Prostate gland (tissue), 2 donors: ENCODE measurements at regions of chr17 and their contacts with region 1.

Region 1: DNA sequence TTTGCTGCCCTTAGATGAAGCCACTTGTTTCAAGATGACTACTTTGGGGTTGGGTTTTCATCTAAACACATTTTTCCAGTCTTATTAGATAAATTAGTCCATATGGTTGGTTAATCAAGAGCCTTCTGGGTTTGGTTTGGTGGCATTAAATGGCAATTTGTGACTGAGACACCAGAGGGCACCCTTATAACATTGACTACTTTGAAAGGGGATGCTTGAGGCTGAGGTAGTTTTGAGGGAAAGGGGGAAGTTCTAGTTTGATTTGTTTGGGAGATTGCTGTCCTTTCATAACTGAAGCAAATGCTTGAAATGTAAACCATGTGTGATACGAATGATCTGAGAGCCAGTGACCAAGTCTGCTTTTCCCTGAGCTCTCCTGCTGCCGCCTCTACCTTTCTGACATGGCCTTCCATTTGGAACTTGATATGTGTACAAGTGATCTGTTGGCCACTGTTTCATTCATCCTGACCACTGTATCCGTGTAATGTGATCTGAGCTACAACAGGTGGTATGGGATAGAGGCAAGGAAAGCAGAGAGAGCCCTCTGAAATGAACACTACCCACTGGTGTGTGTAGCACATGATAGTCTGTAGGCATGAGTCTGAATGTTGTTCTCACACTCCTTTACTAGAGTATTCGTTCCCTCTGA is 5.8 kb upstream of the RARA start:
- DNase-seq: no peak
- H3K4me3 ChIP-seq: no peak overlapping the region
- H3K27ac ChIP-seq: no peak overlapping the region
- H3K4me1 ChIP-seq: peaks cover 18% of the 10 kb centered on the region
- H3K27me3 ChIP-seq: no peaks in the 10 kb centered on the region
- CTCF ChIP-seq: peak; percentile 61 to 91 (median 83)
- POLR2A ChIP-seq: no peak

Region 2: DNA sequence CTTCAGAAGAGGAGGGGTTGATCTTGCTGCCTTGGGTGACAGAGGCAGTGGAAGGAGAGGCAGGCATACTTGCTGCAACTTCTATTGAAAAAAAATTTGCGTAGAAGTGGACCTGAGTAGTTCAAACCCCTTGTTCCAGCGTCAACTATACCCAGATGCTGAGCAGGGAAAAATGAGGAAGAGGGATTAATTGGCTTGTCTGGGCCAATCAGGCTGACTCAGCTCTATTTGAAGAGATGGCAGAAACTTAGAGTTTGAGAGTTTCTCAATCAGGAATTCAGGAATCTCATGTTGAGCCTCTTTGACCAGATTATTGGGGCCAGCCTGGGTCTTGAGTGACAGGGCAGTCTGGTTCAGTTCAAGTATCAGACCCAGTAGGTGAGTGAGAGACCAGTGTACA is 145.2 kb before region 1 on chr17:
- intact Hi-C with region 1: no loop called
- DNase-seq: no peak
- H3K4me3 ChIP-seq: no peak overlapping the region
- H3K27ac ChIP-seq: no peak overlapping the region
- H3K4me1 ChIP-seq: no peaks in the 10 kb centered on the region
- H3K27me3 ChIP-seq: no peaks in the 10 kb centered on the region
- CTCF ChIP-seq: no peak
- POLR2A ChIP-seq: no peak

Region 3: GRCh38 chr17:40209404-40210093 is 93.6 kb before region 1 on chr17:
- intact Hi-C with region 1: no loop called
- DNase-seq: no peak
- H3K4me3 ChIP-seq: no peak overlapping the region
- H3K27ac ChIP-seq: no peak overlapping the region
- H3K4me1 ChIP-seq: no peaks in the 10 kb centered on the region
- H3K27me3 ChIP-seq: no peaks in the 10 kb centered on the region
- CTCF ChIP-seq: no peak
- POLR2A ChIP-seq: no peak

Region 4: DNA sequence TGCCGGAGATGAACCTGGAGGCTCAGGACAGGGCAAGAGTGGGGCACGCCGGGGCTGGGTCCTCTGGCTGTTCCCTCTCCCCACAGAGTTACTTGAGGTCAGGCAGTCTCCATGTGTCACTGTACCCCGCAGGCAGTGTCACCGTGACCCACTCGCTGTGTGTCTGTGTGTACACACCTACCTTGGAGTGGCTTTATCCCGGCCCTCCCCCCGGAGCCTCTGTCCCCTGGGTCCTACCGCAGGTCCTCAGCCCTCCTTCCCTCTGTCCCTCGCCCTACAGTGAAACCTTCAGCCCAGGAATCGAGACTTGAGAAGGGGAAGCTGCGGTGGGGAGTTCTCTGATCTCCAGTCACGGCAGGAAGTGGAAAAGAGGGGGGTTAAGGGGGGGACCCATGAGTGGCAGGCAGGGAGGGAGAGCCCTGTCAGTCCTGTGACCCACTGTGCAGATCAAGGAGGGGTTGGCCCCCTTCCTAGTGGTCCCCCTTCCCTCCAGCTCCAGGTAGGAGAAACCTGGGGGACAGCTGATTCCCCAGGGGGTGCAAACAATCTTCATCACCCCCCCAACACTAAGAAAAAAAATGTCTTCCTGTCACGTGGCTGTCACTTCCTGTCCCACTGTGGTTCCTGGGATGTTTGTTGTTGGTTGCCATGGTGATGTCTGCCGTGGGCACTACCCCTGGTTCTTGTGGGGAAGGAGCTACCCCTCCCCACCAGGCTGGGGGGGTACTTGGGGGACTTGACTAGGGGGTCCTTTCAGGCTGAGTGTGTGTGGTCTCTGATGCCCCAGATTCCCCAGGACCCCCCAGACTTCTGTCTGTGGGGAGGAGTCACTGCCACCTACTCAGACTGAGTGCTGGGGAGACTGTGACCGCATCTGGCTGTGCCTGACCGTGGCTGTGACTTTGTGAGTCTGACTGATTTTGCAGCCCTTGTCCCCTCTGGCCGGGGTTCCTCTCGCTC is 19.5 kb after region 1 on chr17:
- intact Hi-C with region 1: no loop called
- DNase-seq: no peak
- H3K4me3 ChIP-seq: peak overlapping the region; percentile 1 to 19
- H3K27ac ChIP-seq: peak overlapping the region; percentile 58 to 64
- H3K4me1 ChIP-seq: peaks cover 31% of the 10 kb centered on the region
- H3K27me3 ChIP-seq: no peaks in the 10 kb centered on the region
- CTCF ChIP-seq: no peak
- POLR2A ChIP-seq: no peak

Region 5: DNA sequence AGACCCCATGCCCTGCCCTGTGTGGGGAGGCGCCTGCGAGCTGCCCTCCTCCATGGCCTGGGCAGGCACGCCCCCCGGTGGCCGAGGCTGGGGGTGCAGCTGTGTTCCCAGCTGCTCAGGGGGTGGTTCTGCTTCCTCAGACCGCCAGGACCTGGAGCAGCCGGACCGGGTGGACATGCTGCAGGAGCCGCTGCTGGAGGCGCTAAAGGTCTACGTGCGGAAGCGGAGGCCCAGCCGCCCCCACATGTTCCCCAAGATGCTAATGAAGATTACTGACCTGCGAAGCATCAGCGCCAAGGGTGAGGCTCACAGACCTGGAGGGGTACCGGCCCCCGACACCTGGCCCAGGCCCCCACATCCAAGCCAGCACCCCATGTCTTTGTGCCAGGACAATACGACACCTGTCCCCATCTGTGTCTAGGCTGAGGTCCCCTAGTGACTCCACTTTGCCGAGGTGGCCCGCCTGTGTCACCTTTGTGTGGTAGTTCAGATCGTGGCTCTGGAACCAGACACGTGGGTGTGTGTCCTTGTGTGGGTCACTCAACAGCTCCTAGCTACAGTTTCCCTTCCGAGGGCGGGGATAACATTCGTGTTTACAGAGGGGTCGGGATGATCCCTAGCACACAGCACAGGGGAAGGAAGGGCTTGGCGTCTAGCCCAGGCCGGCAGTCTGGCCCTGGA is 52.1 kb after region 1 on chr17:
- intact Hi-C with region 1: loop called (anchors 1 kb)
- DNase-seq: peak; percentile 57
- H3K4me3 ChIP-seq: no peak overlapping the region
- H3K27ac ChIP-seq: peak overlapping the region in 1 of 2 donors; percentile 31
- H3K4me1 ChIP-seq: no peaks in the 10 kb centered on the region
- H3K27me3 ChIP-seq: no peaks in the 10 kb centered on the region
- CTCF ChIP-seq: peak; percentile 95 to 99 (median 98)
- POLR2A ChIP-seq: no peak

Region 6: GRCh38 chr17:40371261-40371929 is 68.3 kb after region 1 on chr17:
- intact Hi-C with region 1: no loop called
- DNase-seq: no peak
- H3K4me3 ChIP-seq: no peak overlapping the region
- H3K27ac ChIP-seq: no peak overlapping the region
- H3K4me1 ChIP-seq: no peaks in the 10 kb centered on the region
- H3K27me3 ChIP-seq: no peaks in the 10 kb centered on the region
- CTCF ChIP-seq: no peak
- POLR2A ChIP-seq: no peak